PC-3 (cell line): ENCODE measurements at regions of chr7 and their contacts with region 1.

Region 1: DNA sequence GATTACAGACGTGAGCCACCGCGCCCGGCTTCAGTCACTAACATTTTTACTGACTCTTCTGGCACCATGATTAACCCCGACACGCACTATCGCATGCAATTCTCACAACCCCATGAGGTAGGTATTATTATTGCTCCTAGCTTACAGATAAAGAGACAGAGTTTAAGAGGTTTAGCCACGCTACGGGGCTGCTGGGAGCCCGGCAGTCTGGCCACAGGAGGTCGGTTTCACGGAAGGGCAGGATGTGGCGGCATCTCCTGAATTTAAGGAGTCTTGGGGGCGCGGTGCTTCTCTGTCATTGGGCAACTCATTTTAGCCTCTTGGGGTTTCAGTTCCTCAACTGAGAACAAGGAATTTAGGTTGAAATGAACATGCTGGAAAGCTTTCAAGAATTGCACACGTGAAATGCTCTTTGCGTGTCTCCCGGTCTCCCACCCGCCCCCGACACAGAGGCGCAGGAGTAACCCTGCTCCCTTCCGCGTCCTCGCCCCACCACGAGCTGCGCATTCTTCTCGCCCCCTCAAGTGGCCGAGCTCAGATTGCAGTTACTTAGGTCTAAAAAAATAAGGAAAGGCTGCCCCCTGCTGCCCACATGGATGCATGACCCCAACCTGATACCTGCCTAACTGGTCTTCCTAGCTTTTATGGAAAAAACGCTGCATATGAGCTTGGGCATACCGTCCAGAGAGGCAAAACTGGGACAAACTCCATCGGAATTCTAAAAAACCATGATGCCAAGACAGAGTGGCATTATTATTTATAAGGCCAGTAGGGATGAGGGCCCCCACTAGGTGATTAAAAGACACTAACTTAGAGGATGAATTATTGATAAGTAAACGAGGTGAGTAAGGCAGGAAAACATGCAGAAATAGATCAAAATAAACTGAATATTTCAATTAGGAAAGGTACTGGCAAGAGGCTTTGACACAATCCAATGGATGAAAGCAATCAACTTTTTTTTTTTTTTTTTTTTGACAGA is 12.4 kb downstream of the PRSS2 start:
- DNase-seq: peak; percentile 94
- ATAC-seq: peak; percentile 85
- H3K4me3 ChIP-seq: peak overlapping the region; percentile 65
- H3K27ac ChIP-seq: peak overlapping the region; percentile 17; the same call in 1 of the 2 replicates
- H3K4me1 ChIP-seq: 0 out of 2 replicates have a peak, but pooled peaks cover 4% of the 10 kb centered on the region
- H3K27me3 ChIP-seq: no peaks in the 10 kb centered on the region
- CTCF ChIP-seq: peak; percentile 97

Region 2: DNA sequence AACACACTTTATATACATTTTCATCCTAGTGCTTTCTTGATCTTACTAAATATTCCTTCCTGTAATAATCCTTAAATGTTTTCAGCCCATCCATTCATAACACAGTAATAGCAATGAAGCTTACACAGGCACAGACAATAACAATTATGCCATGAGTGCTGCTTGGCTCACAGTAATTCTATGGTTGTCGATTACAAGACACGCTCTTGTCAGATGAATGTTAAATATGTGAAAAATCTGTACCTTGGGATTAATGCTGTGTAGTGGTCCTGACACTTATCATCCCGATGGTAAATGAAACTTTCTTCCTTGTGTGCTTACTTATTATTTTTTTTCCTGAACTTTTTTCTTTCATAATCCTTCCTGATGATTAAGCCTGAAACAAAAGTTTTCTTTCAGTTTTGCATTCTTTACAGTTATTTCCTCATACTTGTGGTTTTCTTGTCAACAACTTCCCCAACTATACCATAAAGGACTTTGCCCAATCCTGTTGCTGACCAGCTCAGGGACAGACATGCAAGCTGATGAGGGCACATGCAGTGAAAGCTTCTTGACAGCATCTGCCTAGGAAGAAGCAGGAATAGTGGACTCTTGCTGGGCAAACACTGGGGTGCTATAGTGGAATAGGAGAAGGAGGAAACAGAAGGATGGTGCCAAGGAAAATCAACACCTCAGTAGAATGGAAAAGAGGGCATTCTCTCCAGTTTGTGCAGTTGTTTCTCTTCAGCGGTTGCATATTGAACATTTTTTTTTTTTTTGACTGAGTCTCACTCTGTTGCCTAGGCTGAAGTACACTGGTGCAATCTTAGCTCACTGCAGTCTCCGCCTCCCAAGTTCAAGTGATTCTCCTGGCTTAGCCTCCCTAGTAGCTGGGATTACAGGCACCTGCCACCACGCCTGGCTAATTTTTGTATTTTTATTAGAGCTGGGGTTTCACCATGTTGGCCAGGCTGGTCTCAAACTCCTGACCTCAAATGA is 678.4 kb before region 1 on chr7:
- CTCF ChIA-PET with region 1: no interaction called
- POLR2A ChIA-PET with region 1: no interaction called
- intact Hi-C with region 1: no loop called
- DNase-seq: peak; percentile 69
- ATAC-seq: peak; percentile 72
- H3K4me3 ChIP-seq: peak overlapping the region; percentile 30; the same call in 1 of the 2 replicates
- H3K27ac ChIP-seq: peak overlapping the region; percentile 62
- H3K4me1 ChIP-seq: peaks cover 9% of the 10 kb centered on the region
- H3K27me3 ChIP-seq: 0 out of 2 replicates have a peak, but pooled peaks cover 13% of the 10 kb centered on the region
- CTCF ChIP-seq: no peak

Region 3: GRCh38 chr7:142263598-142264380 is 519.4 kb before region 1 on chr7:
- CTCF ChIA-PET with region 1: no interaction called
- POLR2A ChIA-PET with region 1: no interaction called
- intact Hi-C with region 1: no loop called
- DNase-seq: peak; percentile 48
- ATAC-seq: peak; percentile 56
- H3K4me3 ChIP-seq: no peak overlapping the region
- H3K27ac ChIP-seq: 0 out of 2 replicates have a peak overlapping the region, but pooled peaks have one; percentile 23
- H3K4me1 ChIP-seq: peaks cover 15% of the 10 kb centered on the region
- H3K27me3 ChIP-seq: peaks cover 33% of the 10 kb centered on the region
- CTCF ChIP-seq: no peak

Region 4: DNA sequence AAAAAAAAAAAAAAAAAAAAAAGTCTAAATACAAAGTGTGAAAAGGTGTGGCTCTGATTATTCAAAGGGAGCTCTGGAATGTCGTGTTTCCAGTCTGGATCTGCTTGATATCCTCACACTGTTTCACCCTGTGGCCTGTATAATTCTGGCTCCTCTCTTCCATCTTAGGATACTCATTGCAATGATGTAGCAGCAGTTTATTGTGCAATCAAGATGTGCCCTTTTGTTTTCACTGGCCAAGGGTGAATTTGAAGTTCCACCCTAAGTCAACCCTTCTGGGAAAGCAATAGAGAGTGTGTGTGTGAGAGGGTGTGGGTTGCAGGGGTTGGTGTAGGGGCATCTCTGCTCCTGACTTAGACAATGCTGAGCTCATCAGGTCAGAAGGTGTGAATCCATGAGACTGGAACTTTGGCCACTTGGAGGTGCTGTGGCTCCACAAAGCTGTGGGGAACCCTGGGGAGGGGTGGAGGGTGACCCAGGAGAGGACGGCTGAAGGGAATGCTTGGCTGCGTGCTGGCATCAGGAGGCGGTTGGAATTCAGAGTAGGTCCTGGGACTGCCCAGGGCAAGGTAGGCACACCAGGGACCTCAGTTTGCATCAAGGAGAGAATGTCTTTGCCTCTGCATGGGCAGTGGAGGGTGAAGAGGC is 407.4 kb before region 1 on chr7:
- CTCF ChIA-PET with region 1: interaction called, 17 read pairs
- POLR2A ChIA-PET with region 1: no interaction called
- intact Hi-C with region 1: no loop called
- DNase-seq: peak; percentile 65
- ATAC-seq: peak; percentile 69
- H3K4me3 ChIP-seq: no peak overlapping the region
- H3K27ac ChIP-seq: no peak overlapping the region
- H3K4me1 ChIP-seq: peaks cover 16% of the 10 kb centered on the region
- H3K27me3 ChIP-seq: no peaks in the 10 kb centered on the region
- CTCF ChIP-seq: peak; percentile 62

Region 5: DNA sequence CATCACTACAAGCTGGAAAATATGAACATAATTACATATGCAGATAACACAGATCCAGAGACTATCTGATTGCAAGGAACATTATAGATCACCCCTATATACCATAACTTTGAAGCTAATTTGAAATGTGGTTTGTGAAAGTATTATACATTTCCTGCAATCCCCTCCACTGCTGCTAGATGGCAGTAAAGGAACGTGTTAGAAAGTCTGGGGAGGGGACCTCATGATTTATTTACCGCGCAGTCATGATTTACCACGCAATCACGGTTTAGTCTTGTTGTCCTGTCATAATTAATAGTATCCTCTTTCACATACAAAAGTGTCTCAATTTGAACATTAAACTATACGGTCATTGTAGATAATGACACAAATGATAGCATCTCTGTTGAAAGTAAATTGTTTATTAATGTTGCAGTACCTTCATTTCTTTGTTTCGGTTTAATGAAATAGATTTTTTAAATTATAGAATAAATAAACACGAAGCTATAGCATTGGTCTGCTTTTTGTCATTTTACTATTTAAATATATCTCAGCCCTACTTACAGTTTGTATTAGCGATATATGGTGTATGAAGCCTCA is 179.3 kb before region 1 on chr7:
- CTCF ChIA-PET with region 1: interaction called, 43 read pairs
- POLR2A ChIA-PET with region 1: no interaction called
- intact Hi-C with region 1: loop called (anchors 1 kb)
- DNase-seq: peak; percentile 84
- ATAC-seq: peak; percentile 75
- H3K4me3 ChIP-seq: peak overlapping the region; percentile 74
- H3K27ac ChIP-seq: no peak overlapping the region
- H3K4me1 ChIP-seq: peaks cover 8% of the 10 kb centered on the region
- H3K27me3 ChIP-seq: no peaks in the 10 kb centered on the region
- CTCF ChIP-seq: peak; percentile 93

Region 6: GRCh38 chr7:142654398-142654797 is 128.8 kb before region 1 on chr7:
- CTCF ChIA-PET with region 1: interaction called, 9 read pairs
- POLR2A ChIA-PET with region 1: no interaction called
- intact Hi-C with region 1: loop called (anchors 1 kb)
- DNase-seq: peak; percentile 47
- ATAC-seq: no peak
- H3K4me3 ChIP-seq: no peak overlapping the region
- H3K27ac ChIP-seq: no peak overlapping the region
- H3K4me1 ChIP-seq: no peaks in the 10 kb centered on the region
- H3K27me3 ChIP-seq: peaks cover 63% of the 10 kb centered on the region
- CTCF ChIP-seq: peak; percentile 56

Region 7: GRCh38 chr7:142689439-142690120 is 93.6 kb before region 1 on chr7:
- CTCF ChIA-PET with region 1: interaction called, 3 read pairs
- POLR2A ChIA-PET with region 1: no interaction called
- intact Hi-C with region 1: loop called (anchors 1 kb)
- DNase-seq: peak; percentile 36
- ATAC-seq: peak; percentile 20; the same call in 1 of the 2 replicates
- H3K4me3 ChIP-seq: no peak overlapping the region
- H3K27ac ChIP-seq: no peak overlapping the region
- H3K4me1 ChIP-seq: no peaks in the 10 kb centered on the region
- H3K27me3 ChIP-seq: peaks cover 17% of the 10 kb centered on the region
- CTCF ChIP-seq: peak; percentile 65

Region 8: DNA sequence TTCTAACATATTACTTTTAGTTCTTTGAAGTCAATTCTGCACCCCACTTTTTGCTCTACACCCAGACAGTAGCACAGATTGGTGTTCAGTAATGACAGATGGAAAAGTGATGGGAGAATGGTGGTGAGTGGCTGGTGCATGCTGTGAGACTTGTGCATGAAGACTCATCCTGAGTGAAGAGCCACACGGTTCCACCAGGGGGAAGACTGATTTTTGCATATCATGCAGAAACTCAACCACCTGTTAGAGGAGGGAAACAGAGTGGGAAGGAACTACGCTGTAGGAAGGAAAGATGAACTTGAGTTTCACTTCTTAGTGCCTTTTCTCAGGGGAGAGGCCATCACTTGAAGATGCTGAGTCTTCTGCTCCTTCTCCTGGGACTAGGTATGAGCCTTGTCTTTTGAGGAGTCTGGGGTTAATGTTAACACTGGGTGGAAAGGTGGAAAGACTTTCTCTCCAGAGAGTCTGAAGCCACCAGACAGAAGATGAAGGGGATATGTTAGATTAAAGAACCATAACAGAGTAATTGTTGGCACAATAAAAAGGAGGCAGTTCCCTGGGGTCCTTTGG is 43.2 kb before region 1 on chr7:
- CTCF ChIA-PET with region 1: no interaction called
- POLR2A ChIA-PET with region 1: no interaction called
- intact Hi-C with region 1: loop called (anchors 1 kb)
- DNase-seq: peak; percentile 42
- ATAC-seq: peak; percentile 88
- H3K4me3 ChIP-seq: no peak overlapping the region
- H3K27ac ChIP-seq: no peak overlapping the region
- H3K4me1 ChIP-seq: no peaks in the 10 kb centered on the region
- H3K27me3 ChIP-seq: peaks cover 56% of the 10 kb centered on the region
- CTCF ChIP-seq: peak; percentile 36

Region 9: DNA sequence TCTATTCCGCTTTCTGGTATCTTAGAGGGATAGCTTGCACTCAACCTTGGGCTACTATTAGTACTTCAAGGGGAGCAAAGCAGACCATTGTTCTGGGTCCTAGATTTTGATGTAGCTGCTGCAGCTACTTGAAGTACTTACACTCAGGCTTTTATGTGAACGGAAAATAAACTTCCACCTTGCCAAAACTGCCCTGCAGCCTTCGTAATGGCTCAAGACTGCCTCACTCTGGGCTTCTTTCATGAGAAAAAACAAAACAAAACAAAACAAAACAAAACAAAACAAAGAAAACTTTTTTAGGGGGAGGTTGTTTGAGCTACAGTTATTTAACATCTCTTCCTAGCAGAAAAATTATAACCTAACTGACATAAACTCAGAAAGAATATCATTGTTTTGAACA is 52.3 kb after region 1 on chr7:
- CTCF ChIA-PET with region 1: interaction called, 22 read pairs
- POLR2A ChIA-PET with region 1: interaction called, 5 read pairs
- intact Hi-C with region 1: no loop called
- DNase-seq: peak; percentile 45
- ATAC-seq: 0 out of 2 replicates have a peak, but pooled peaks have one; percentile 11
- H3K4me3 ChIP-seq: no peak overlapping the region
- H3K27ac ChIP-seq: peak overlapping the region; percentile 39
- H3K4me1 ChIP-seq: peaks cover 38% of the 10 kb centered on the region
- H3K27me3 ChIP-seq: no peaks in the 10 kb centered on the region
- CTCF ChIP-seq: peak; percentile 59